ENCODE measurements at regions of chr4 and their contacts with region 1.

Region 1: DNA sequence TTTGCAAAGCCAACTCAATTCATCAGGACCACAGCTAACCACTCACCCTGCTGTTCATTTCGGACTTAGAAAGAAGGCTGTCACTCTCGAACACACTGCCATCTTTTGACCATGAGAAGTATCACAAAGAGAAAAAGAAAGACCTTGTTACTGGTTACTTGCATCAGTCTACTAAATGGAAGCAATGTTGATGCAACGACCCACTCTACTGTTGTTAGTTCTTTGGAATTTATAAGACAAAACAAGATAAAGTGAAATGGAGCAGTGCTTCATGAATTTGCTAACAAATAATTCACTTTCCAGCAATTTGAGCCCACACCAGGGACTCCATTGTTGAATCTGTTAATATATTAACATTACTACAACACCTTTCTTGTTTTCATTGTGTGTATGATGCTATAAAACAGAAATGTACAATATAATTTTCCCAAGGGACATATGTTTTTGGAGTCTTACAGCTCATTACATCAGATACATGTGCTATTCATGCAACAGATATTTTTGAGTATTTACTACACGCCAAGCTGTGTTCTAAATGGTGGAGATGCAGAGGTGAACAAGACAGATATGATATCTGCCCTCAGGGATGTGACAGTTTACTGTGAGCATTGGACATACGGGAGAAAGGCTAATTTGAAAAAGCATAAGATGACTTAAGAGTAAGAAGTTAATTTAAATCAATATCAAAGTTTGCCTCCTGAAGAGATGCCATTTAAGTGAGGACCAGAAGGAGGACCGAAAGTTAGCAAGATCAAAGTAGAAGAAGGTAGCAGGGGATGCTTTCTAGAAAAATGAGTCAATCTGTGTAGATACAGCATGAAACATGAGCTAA is 87.2 kb downstream of the AREG start:
- DNase-seq: peak; percentile 87
- H3K4me3 ChIP-seq: no peak overlapping the region
- H3K27ac ChIP-seq: no peak overlapping the region
- H3K4me1 ChIP-seq: no peaks in the 10 kb centered on the region
- H3K27me3 ChIP-seq: no peaks in the 10 kb centered on the region
- CTCF ChIP-seq: peak; percentile 53 to 60
- POLR2A ChIP-seq: no peak

Region 2: GRCh38 chr4:74320559-74321118 is 211.5 kb before region 1 on chr4:
- CTCF ChIA-PET with region 1: interaction called, 85 read pairs
- POLR2A ChIA-PET with region 1: no interaction called
- dilution Hi-C with region 1: no loop called
- intact Hi-C with region 1: loop called (anchors 1 kb)
- DNase-seq: peak; percentile 74
- H3K4me3 ChIP-seq: no peak overlapping the region
- H3K27ac ChIP-seq: no peak overlapping the region
- H3K4me1 ChIP-seq: no peaks in the 10 kb centered on the region
- H3K27me3 ChIP-seq: no peaks in the 10 kb centered on the region
- CTCF ChIP-seq: peak; percentile 44
- POLR2A ChIP-seq: no peak

Region 3: GRCh38 chr4:74364652-74365491 is 167.3 kb before region 1 on chr4 and contains the start of gene EREG:
- CTCF ChIA-PET with region 1: interaction called, 37 read pairs
- POLR2A ChIA-PET with region 1: no interaction called
- dilution Hi-C with region 1: no loop called
- intact Hi-C with region 1: no loop called
- DNase-seq: peak; percentile 36
- H3K4me3 ChIP-seq: peak within 1 kb of the TSS; percentile 35 to 63 (median 38)
- H3K27ac ChIP-seq: no peak within 1 kb of the TSS
- H3K4me1 ChIP-seq: no peaks in the 10 kb centered on the region
- H3K27me3 ChIP-seq: no peaks in the 10 kb centered on the region
- CTCF ChIP-seq: no peak
- POLR2A ChIP-seq: no peak
- total RNA-seq, gene EREG: not detected in 2 replicates

Region 4: DNA sequence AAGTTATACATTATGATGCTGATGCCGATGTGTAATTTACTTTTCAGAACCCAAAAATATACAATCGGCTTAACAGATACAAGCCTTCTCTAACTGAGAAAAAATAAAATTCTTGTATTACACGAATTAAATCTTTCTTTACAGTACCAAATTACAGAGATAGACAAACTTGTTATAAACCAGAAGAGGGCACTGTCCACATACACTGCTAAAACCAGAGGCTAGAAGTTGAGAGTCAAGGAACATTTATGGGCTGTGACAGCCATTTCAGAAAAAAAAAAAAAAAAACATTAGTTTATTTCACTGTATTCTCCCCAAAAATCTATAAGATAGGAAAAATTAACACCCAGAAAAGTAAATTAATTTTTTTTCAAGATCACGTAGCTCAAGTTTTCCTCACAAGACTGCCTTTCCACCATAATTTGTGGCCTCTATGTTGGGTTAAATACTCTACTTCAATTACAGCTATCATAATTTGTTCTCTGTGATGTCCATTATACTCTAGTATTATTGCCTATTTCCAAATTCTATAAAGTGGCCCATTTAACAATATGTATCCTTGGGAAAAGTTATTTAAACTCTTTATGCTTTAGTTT is 155.2 kb before region 1 on chr4:
- CTCF ChIA-PET with region 1: interaction called, 224 read pairs
- POLR2A ChIA-PET with region 1: no interaction called
- dilution Hi-C with region 1: loop called (anchors 25 kb)
- intact Hi-C with region 1: loop called (anchors 1 kb)
- DNase-seq: peak; percentile 67
- H3K4me3 ChIP-seq: no peak overlapping the region
- H3K27ac ChIP-seq: no peak overlapping the region
- H3K4me1 ChIP-seq: peaks cover 7% of the 10 kb centered on the region
- H3K27me3 ChIP-seq: no peaks in the 10 kb centered on the region
- CTCF ChIP-seq: peak; percentile 31
- POLR2A ChIP-seq: no peak

Region 5: DNA sequence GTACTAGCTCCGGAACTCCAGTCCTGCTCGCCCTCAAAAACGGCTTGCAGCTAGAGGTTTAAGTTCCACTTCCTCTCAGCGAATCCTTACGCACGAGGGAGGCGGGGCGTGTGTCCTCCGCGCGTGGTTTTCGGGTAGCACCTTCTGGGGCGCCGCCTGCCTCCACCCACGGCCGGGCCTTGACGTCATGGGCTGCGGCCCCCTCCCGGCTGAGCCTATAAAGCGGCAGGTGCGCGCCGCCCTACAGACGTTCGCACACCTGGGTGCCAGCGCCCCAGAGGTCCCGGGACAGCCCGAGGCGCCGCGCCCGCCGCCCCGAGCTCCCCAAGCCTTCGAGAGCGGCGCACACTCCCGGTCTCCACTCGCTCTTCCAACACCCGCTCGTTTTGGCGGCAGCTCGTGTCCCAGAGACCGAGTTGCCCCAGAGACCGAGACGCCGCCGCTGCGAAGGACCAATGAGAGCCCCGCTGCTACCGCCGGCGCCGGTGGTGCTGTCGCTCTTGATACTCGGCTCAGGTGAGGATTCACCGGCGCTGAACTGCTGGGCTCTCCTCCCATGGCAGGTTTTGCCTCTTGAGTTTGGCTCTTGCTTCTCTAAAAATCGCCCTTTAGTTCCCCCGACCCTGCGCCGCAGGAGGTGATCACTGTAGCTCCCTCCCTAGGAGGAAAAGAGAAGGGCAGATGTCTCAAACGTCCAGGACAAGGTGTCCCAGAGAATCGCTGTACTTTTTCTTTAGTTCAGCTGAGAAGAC is 87.1 kb before region 1 on chr4 and contains the start of gene AREG:
- CTCF ChIA-PET with region 1: interaction called, 17 read pairs
- POLR2A ChIA-PET with region 1: no interaction called
- dilution Hi-C with region 1: no loop called
- intact Hi-C with region 1: loop called (anchors 2 kb)
- DNase-seq: peak; percentile 70
- H3K4me3 ChIP-seq: peak within 1 kb of the TSS; percentile 8 to 73 (median 45)
- H3K27ac ChIP-seq: no peak within 1 kb of the TSS
- H3K4me1 ChIP-seq: peaks cover 3% of the 10 kb centered on the region
- H3K27me3 ChIP-seq: no peaks in the 10 kb centered on the region
- CTCF ChIP-seq: peak; percentile 62
- POLR2A ChIP-seq: no peak
- total RNA-seq, gene AREG: 0.46 and 0.55 TPM in 2 replicates

Region 6: DNA sequence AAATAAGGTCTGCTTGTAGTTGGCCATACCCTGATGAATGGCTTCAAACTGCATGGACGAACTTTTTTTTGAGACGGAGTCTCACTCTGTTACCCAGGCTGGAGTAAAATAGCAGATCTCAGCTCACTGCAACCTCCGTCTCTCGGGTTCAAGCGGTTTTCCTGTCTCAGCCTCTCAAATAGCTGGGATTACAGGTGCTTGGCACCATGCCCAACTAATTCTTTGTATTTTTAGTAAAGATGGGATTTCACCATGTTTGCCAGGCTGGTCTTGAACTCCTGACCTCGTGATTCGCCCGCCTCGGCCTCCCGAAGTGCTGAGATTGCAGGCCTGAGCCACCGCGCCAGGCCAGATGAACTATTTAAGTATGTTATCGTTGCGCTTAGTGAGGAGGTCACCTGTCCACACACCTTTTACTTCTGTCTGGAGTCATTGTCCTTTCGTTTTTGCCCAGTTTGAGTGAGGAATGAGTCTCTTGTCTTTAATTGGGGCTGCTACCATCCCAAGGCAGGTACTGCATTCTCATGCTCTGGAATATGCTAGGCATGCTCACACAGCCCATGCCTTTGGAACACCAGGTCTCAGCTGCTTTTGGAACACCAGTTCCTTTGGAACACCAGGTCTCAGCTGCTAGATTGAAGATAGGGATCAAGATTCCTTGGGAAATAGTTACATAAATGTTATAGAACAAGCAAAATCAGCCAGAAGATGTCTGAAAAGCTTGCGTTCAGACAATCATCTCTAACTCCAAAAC is 14.4 kb before region 1 on chr4:
- CTCF ChIA-PET with region 1: interaction called, 14 read pairs
- POLR2A ChIA-PET with region 1: no interaction called
- dilution Hi-C with region 1: no loop called
- intact Hi-C with region 1: no loop called
- DNase-seq: no peak
- H3K4me3 ChIP-seq: no peak overlapping the region
- H3K27ac ChIP-seq: no peak overlapping the region
- H3K4me1 ChIP-seq: no peaks in the 10 kb centered on the region
- H3K27me3 ChIP-seq: no peaks in the 10 kb centered on the region
- CTCF ChIP-seq: no peak
- POLR2A ChIP-seq: no peak